CD8-positive, alpha-beta T cell (primary cell): ENCODE measurements at regions of chr17 and their contacts with region 1.

Region 1: DNA sequence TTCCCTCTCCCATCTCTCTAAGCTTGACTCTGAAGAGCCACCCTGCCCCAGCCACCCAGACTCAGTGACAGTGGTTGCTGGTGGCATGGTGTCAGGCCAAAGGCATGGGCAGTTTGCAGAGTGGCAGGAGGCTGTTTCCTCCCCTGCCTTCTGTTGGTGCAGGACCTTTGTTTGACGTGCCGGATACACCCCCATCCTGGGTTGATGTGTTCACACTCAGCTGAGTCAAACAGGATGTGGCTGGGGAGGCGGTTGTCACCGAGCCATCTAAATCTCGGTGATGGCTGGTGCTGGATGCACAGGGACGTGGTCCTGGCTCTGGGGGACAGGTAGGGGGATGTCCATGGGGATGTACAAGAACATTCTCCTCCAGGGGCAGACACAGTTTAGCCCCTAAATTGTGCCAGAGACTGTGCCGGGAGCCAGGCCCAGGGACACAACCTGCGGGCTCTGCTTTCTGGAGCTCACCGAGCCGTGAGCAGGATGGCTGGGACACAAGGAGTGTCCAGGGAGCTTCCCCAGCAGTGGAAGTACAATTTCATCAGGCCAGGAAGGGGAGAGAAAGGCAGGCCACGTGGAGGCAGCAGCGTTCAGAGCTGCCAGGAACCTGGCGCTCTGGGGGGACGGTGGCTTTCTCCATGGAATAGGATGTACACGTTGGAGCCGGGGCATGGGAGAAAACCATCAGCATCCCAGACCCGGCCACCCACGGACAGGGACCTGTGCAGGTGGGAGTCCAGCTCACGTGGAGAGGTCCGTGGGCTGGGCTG is 264.2 kb downstream of the SEC14L1 start:
- DNase-seq: peak; percentile 62 to 94 (median 88)
- ATAC-seq: peak; percentile 69
- H3K4me3 ChIP-seq: peak overlapping the region; percentile 58 to 60
- H3K4me3 Mint-ChIP-seq: peak overlapping the region; percentile 93
- H3K27ac ChIP-seq: peak overlapping the region; percentile 65 to 76
- H3K27ac Mint-ChIP-seq: peak overlapping the region; percentile 99
- H3K4me1 ChIP-seq: peaks cover 96% of the 10 kb centered on the region
- H3K4me1 Mint-ChIP-seq: peaks cover 87% of the 10 kb centered on the region
- H3K27me3 ChIP-seq: no peaks in the 10 kb centered on the region
- H3K27me3 Mint-ChIP-seq: no peaks in the 10 kb centered on the region
- CTCF ChIP-seq: no peak

Region 2: DNA sequence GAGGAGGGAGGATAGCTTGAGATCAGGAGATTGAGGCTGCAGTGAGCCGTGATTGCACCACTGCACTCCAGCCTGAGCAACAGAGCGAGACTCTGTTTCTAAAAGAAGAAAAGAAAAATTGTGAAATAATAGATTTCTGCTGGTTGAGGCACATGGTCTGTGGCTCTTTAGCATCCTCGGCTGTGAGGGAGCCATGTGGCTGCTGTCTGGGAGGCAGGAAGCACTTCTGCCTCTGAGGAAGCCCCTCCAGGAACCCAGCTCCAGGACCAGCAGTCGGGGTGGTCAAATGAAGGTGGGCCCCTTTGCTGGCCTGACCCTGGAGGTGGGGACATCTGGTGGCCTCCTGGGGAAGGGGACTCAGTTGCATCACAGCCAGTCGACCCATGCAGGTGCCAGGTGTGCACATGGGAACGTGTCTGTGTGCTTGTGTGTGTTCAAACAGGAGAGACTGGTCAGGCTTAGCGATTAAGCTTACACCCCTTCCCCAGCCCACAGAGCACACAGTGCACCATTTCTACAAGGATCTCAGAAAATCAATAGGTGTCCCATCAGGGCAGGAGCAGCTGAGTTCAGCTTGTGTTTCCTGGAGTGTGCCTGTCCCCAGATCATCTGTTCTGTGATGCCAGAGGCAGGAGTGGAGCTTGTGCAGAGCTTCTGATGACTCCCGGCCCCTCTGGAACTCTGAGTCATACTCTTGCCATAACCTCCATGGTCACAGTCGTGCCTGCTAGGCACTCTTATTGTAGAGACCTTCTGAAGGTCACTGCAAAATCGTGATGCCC is 561.1 kb before region 1 on chr17:
- CTCF ChIA-PET with region 1: no interaction called
- POLR2A ChIA-PET with region 1: no interaction called
- intact Hi-C with region 1: no loop called
- DNase-seq: no peak
- ATAC-seq: no peak
- H3K4me3 ChIP-seq: no peak overlapping the region
- H3K4me3 Mint-ChIP-seq: no peak overlapping the region
- H3K27ac ChIP-seq: no peak overlapping the region
- H3K27ac Mint-ChIP-seq: no peak overlapping the region
- H3K4me1 ChIP-seq: peaks cover 8% of the 10 kb centered on the region
- H3K4me1 Mint-ChIP-seq: peaks cover 8% of the 10 kb centered on the region
- H3K27me3 ChIP-seq: peaks cover 23 to 26% of the 10 kb centered on the region in 2 experiments
- H3K27me3 Mint-ChIP-seq: peaks cover 56% of the 10 kb centered on the region
- CTCF ChIP-seq: no peak

Region 3: DNA sequence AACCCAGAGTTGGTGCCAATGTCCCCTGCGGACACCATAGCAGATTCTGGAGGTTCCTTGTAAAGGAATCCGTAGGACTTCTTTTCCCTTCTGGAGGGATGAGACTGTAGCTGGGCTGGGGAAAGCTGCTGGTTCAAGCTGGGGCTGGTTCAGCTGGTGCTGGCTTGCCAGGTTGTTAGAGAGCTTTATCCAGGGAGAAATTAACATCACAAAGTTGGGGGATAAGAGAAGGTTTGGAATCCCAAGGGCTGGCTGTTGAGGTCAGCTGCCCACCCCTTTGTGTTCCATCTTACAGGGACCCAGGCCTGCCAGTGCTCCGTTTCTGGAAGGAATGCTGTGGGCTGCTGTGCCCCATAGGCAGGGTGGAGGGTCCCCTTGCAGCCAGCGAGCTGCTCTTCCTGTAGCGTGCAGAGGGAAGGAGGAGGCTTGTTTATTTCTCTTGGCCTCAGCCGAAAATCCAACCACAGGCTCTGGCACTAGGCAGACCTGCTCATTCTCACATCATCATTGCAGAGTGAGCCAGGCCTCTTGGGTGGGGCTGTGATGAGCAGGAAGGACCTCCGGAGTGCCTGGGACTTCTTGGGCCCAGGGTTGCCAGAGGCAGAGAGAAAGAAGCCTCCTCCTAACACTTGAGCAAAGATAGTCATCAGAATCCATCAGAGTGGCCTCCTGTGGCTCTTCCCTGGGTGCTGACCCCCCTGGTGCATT is 13.2 kb before region 1 on chr17:
- CTCF ChIA-PET with region 1: interaction called, 47 read pairs
- POLR2A ChIA-PET with region 1: interaction called, 23 read pairs
- intact Hi-C with region 1: loop called in 1 of 2 experiments (anchors 2 kb)
- DNase-seq: peak in 6 of 9 experiments; percentile 34 to 78 (median 54)
- ATAC-seq: peak; percentile 46
- H3K4me3 ChIP-seq: no peak overlapping the region
- H3K4me3 Mint-ChIP-seq: peak overlapping the region; percentile 54
- H3K27ac ChIP-seq: peak overlapping the region in 1 of 2 experiments; percentile 7
- H3K27ac Mint-ChIP-seq: peak overlapping the region; percentile 84
- H3K4me1 ChIP-seq: peaks cover 83% of the 10 kb centered on the region
- H3K4me1 Mint-ChIP-seq: peaks cover 79% of the 10 kb centered on the region
- H3K27me3 ChIP-seq: no peaks in the 10 kb centered on the region
- H3K27me3 Mint-ChIP-seq: no peaks in the 10 kb centered on the region
- CTCF ChIP-seq: no peak

Region 4: GRCh38 chr17:77437017-77437416 is 32.0 kb after region 1 on chr17:
- CTCF ChIA-PET with region 1: interaction called, 26 read pairs
- POLR2A ChIA-PET with region 1: interaction called, 19 read pairs
- intact Hi-C with region 1: no loop called
- DNase-seq: peak in 6 of 9 experiments; percentile 42 to 61 (median 56)
- ATAC-seq: no peak
- H3K4me3 ChIP-seq: peak overlapping the region in 1 of 2 experiments; percentile 70
- H3K4me3 Mint-ChIP-seq: peak overlapping the region; percentile 95
- H3K27ac ChIP-seq: peak overlapping the region; percentile 46 to 66
- H3K27ac Mint-ChIP-seq: peak overlapping the region; percentile 97
- H3K4me1 ChIP-seq: peaks cover 83% of the 10 kb centered on the region
- H3K4me1 Mint-ChIP-seq: peaks cover 88% of the 10 kb centered on the region
- H3K27me3 ChIP-seq: no peaks in the 10 kb centered on the region
- H3K27me3 Mint-ChIP-seq: no peaks in the 10 kb centered on the region
- CTCF ChIP-seq: no peak

Region 5: DNA sequence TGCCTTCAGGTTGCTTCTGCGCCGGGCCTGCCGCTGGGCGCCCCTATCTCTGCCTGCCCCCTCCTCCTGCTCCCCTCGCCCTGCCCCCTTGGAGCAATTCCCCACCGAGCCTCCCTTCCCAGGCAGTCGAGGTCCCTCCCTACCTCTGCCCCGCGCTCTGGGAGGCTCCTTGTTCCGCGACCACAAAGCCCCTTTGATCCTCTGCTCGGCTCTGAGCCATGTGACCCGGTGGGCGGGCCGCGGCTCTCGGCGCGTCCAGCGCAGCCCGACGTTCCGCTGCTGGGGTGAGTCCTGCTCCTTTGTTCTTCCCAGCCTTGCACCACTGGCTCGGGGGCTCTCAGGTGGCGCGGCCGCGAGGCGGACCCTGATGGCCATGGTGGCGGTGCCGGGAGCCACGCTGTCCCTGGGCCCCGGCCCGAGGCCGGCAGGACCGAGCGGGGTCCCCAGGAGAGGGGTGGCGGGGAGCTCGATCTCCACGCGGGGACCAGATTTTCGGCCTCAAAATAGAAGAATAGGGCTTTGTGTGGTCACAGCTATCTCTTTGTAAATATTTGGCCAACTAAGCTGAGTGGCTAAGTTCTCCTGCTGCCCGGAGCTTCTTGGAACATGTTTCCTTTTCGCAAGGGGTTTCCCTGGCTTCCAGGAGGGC is 46.4 kb after region 1 on chr17:
- CTCF ChIA-PET with region 1: interaction called, 23 read pairs
- POLR2A ChIA-PET with region 1: interaction called, 21 read pairs
- intact Hi-C with region 1: no loop called
- DNase-seq: peak; percentile 36 to 86 (median 73)
- ATAC-seq: peak; percentile 25
- H3K4me3 ChIP-seq: peak overlapping the region; percentile 93 to 99
- H3K4me3 Mint-ChIP-seq: peak overlapping the region; percentile 94
- H3K27ac ChIP-seq: peak overlapping the region; percentile 80 to 86
- H3K27ac Mint-ChIP-seq: peak overlapping the region; percentile 100
- H3K4me1 ChIP-seq: peaks cover 54% of the 10 kb centered on the region
- H3K4me1 Mint-ChIP-seq: peaks cover 50% of the 10 kb centered on the region
- H3K27me3 ChIP-seq: no peaks in the 10 kb centered on the region
- H3K27me3 Mint-ChIP-seq: no peaks in the 10 kb centered on the region
- CTCF ChIP-seq: no peak

Region 6: GRCh38 chr17:77471984-77472461 is 67.0 kb after region 1 on chr17:
- CTCF ChIA-PET with region 1: interaction called, 11 read pairs
- POLR2A ChIA-PET with region 1: interaction called, 6 read pairs
- intact Hi-C with region 1: no loop called
- DNase-seq: no peak
- ATAC-seq: no peak
- H3K4me3 ChIP-seq: peak overlapping the region; percentile 5 to 33
- H3K4me3 Mint-ChIP-seq: peak overlapping the region; percentile 75
- H3K27ac ChIP-seq: peak overlapping the region; percentile 11 to 62
- H3K27ac Mint-ChIP-seq: peak overlapping the region; percentile 99
- H3K4me1 ChIP-seq: peaks cover 100% of the 10 kb centered on the region
- H3K4me1 Mint-ChIP-seq: peaks cover 95% of the 10 kb centered on the region
- H3K27me3 ChIP-seq: no peaks in the 10 kb centered on the region
- H3K27me3 Mint-ChIP-seq: no peaks in the 10 kb centered on the region
- CTCF ChIP-seq: no peak